Tibial artery (tissue), 4 donors: ENCODE measurements at regions of chr5 and their contacts with region 1.

Region 1: GRCh38 chr5:146203011-146203871 is at the start of gene RBM27:
- DNase-seq: peak; percentile 97 to 99
- H3K4me3 ChIP-seq: peak within 1 kb of the TSS; percentile 84 to 92
- H3K27ac ChIP-seq: peak within 1 kb of the TSS; percentile 92 to 93
- H3K4me1 ChIP-seq: peaks cover 0 to 40% (median 24%) of the 10 kb centered on the region in 4 donors
- H3K27me3 ChIP-seq: no peaks in the 10 kb centered on the region
- CTCF ChIP-seq: peak in 1 of 2 experiments; percentile 40

Region 2: GRCh38 chr5:146188358-146188757 is 14.9 kb before region 1 on chr5:
- intact Hi-C with region 1: loop called (anchors 2 kb)
- DNase-seq: no peak
- H3K4me3 ChIP-seq: no peak overlapping the region
- H3K27ac ChIP-seq: no peak overlapping the region
- H3K4me1 ChIP-seq: peaks cover 0 to under 1% (median 0%) of the 10 kb centered on the region in 4 donors
- H3K27me3 ChIP-seq: no peaks in the 10 kb centered on the region
- CTCF ChIP-seq: no peak

Region 3: GRCh38 chr5:146446853-146447733 is 243.9 kb after region 1 on chr5 and contains the start of gene TCERG1:
- intact Hi-C with region 1: loop called (anchors 10 kb)
- DNase-seq: peak; percentile 100
- H3K4me3 ChIP-seq: peak within 1 kb of the TSS; percentile 95 to 97
- H3K27ac ChIP-seq: peak within 1 kb of the TSS; percentile 85 to 89
- H3K4me1 ChIP-seq: peaks cover 0 to 29% (median 20%) of the 10 kb centered on the region in 4 donors
- H3K27me3 ChIP-seq: no peaks in the 10 kb centered on the region
- CTCF ChIP-seq: peak; percentile 72 to 73

Region 4: DNA sequence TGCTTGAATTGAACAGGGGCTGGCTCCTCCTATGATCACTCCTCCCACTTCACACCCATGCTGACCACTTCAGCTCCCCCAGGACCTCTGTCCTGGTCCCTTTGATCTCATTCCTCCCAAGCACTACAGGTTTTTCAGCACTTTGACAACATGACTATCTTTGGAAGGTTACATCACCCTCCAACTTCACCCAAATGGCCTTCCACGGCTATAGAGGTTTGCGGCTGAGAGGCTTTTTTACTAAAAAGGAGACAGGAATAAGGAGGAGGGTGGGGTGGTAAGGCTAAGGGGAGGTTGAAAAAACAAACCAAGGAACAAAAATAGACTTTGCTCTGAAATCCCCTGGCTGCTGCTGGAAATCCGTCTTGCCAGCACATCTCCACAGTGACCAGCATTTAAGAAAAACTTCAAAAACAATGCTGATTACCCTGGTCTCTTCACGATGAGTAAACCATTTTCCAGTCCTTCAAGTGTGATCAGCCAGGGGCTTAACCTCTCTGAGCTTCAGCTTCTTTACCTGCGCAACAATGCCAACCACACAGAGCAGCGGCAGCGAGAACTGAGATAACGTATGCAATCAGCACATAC is 1203.9 kb after region 1 on chr5:
- intact Hi-C with region 1: no loop called
- DNase-seq: peak; percentile 36 to 75
- H3K4me3 ChIP-seq: no peak overlapping the region
- H3K27ac ChIP-seq: peak overlapping the region; percentile 96 to 98
- H3K4me1 ChIP-seq: peaks cover 5 to 98% (median 64%) of the 10 kb centered on the region in 4 donors
- H3K27me3 ChIP-seq: no peaks in the 10 kb centered on the region
- CTCF ChIP-seq: no peak